Tibial artery (tissue), 4 donors: ENCODE measurements at regions of chr2 and their contacts with region 1.

Region 1: DNA sequence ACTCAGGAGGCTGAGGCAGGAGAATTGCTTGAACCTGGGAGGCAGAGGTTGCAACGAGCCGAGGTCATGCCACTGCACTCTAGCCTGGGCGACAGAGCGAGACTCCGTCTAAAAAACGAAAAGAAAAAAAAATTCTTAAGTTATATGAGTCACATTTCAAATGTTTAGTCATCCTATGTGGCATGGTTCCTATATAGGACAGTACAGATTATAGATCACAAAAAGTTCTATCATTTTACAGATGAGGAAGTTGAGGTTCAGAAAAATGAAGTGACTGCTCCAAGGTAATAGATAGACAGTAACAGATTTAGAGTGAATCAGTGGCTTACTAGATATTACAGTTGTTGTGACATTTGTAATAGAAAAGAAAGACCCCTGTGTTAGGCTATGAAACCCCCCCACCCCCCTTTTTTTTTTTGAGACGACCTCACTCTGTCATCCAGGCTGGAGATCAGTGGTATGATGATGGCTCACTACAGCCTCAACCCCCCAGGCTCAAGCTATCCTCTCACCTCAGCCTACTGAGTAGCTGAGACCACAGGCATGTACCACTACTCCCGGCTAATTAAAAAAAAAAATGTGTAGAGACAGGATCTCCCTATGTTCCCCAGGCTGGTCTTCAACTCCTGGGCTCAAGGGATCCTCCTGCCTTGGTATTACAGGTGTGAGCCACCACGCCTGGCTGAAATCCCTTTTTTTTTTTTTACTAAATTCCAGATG is 22.7 kb downstream of the PTPN4 start:
- DNase-seq: no peak
- H3K4me3 ChIP-seq: no peak overlapping the region
- H3K27ac ChIP-seq: no peak overlapping the region
- H3K4me1 ChIP-seq: peaks cover 0 to 4% (median 0%) of the 10 kb centered on the region in 4 donors
- H3K27me3 ChIP-seq: no peaks in the 10 kb centered on the region
- CTCF ChIP-seq: no peak

Region 2: DNA sequence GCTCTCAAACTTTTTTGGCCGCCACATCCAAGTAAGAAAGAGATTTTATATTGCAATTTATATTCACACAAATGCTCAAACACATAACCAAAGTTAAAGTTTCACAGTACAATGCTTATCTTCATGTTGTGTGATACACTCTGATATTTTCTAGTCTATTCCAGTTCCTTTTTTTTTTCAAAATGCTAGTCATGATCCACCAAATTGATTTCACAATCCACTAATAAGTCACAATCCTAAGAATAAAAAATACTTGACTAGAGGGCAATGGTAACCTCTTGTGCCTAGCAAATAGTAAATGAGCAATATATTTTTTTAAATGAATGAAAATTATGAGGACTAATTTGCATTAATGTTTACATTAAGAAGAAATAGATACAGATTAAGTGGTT is 28.5 kb before region 1 on chr2:
- intact Hi-C with region 1: loop called (anchors 2 kb)
- DNase-seq: no peak
- H3K4me3 ChIP-seq: no peak overlapping the region
- H3K27ac ChIP-seq: no peak overlapping the region
- H3K4me1 ChIP-seq: peaks cover 0 to 11% (median 0%) of the 10 kb centered on the region in 4 donors
- H3K27me3 ChIP-seq: no peaks in the 10 kb centered on the region
- CTCF ChIP-seq: no peak